PC-3 (cell line): ENCODE measurements at regions of chr12 and their contacts with region 1.

Region 1: GRCh38 chr12:94545935-94546771 is 86.5 kb upstream of the CEP83 start:
- DNase-seq: peak; percentile 80
- ATAC-seq: peak; percentile 98
- H3K4me3 ChIP-seq: no peak overlapping the region
- H3K27ac ChIP-seq: no peak overlapping the region
- H3K4me1 ChIP-seq: no peaks in the 10 kb centered on the region
- H3K27me3 ChIP-seq: no peaks in the 10 kb centered on the region
- CTCF ChIP-seq: peak; percentile 92

Region 2: DNA sequence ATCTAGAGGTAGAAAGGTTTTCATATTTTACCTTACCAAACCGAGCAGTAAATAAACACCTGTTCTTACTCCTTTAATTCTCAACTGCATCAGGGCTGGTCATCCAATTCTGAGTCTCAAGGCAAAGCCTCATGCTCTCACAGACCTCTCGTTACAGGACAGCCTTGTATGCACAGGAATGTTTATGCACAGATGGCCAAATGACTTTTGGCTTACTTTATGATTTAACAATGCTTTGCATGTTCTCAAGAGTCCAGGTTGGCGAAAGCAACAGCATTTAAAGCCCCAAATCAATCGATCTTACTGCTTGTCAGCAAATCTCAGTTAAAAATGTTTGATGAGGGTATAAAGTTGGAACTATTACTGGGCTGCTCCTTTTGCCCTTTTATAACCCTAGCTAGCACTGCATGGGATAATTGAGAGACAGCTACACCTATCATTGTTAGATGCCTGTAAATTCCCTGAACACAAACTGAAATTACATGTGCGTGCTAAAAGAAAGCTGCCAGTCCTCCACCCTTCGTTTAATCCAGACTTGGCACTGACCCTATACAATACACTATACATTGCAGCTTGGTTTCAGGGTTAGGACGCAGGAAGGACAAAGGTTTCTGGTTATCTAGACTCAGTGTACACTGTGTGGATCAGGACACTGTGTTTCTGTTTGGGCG is 40.6 kb after region 1 on chr12:
- CTCF ChIA-PET with region 1: no interaction called
- POLR2A ChIA-PET with region 1: no interaction called
- intact Hi-C with region 1: no loop called
- DNase-seq: peak; percentile 64
- ATAC-seq: peak; percentile 75
- H3K4me3 ChIP-seq: no peak overlapping the region
- H3K27ac ChIP-seq: no peak overlapping the region
- H3K4me1 ChIP-seq: peaks cover 29% of the 10 kb centered on the region
- H3K27me3 ChIP-seq: no peaks in the 10 kb centered on the region
- CTCF ChIP-seq: no peak

Region 3: GRCh38 chr12:94644141-94644979 is 98.2 kb after region 1 on chr12:
- CTCF ChIA-PET with region 1: no interaction called
- POLR2A ChIA-PET with region 1: no interaction called
- intact Hi-C with region 1: loop called (anchors 2 kb)
- DNase-seq: peak; percentile 92
- ATAC-seq: peak; percentile 71
- H3K4me3 ChIP-seq: peak overlapping the region; percentile 56
- H3K27ac ChIP-seq: peak overlapping the region; percentile 94
- H3K4me1 ChIP-seq: peaks cover 48% of the 10 kb centered on the region
- H3K27me3 ChIP-seq: no peaks in the 10 kb centered on the region
- CTCF ChIP-seq: no peak

Region 4: DNA sequence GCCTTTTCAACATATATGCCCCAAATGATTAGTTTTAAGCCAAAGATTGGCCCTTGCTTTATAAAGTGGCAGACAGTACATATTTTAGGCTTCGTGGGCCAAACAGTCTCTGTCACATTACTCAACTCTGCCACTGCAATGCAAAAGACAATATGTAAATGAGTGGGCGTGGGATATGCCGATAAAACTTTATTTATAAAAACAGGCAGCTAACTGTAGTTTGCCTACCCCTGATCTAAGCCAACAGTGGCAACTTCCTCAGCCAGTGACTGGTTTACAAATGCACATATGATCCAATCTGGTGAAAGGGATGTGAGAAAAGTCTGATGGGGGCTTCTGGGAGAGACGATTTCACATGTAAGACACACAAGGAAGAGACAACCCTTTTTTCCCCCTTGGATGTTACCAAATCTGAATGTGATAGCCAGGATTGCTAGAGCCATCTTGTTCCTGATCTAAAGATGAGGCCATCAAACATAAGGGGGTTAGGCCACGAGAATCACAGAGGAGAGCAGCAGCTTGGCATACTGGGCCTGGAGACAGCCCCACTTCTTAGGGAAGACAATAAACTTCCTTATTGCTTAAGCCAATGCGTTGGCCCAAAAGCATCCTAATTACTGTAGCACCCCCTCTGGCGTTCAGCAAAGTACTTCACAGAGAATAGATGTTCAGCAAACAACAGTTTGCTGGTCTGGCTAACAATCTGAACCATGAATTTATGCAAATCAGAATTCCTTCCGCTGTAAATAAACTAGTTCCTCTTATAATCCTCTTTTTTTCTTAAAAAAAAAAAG is 179.4 kb after region 1 on chr12:
- CTCF ChIA-PET with region 1: no interaction called
- POLR2A ChIA-PET with region 1: no interaction called
- intact Hi-C with region 1: loop called (anchors 1 kb)
- DNase-seq: peak; percentile 75
- ATAC-seq: peak; percentile 81
- H3K4me3 ChIP-seq: no peak overlapping the region
- H3K27ac ChIP-seq: no peak overlapping the region
- H3K4me1 ChIP-seq: no peaks in the 10 kb centered on the region
- H3K27me3 ChIP-seq: no peaks in the 10 kb centered on the region
- CTCF ChIP-seq: peak; percentile 77

Region 5: DNA sequence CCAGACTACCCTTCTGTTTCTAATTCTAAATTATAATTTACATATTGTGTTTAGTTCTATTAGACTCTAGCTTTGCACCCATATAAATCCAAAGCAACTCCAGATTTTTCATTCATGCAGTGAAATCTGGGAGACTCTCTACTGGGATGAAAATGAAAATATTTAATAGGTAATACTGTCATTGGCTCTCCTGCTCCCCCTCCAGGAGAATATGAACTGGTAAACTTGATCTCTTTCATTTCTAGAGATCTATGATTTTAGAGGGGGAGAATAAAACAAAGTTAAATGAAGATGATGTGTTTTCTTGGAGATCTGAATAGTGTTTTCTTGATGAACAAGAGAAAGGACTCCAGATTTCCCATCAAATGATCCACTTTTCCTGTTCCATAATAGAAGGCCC is 208.5 kb after region 1 on chr12:
- CTCF ChIA-PET with region 1: no interaction called
- POLR2A ChIA-PET with region 1: no interaction called
- intact Hi-C with region 1: loop called (anchors 2 kb)
- DNase-seq: peak; percentile 24
- ATAC-seq: no peak
- H3K4me3 ChIP-seq: no peak overlapping the region
- H3K27ac ChIP-seq: no peak overlapping the region
- H3K4me1 ChIP-seq: no peaks in the 10 kb centered on the region
- H3K27me3 ChIP-seq: no peaks in the 10 kb centered on the region
- CTCF ChIP-seq: peak; percentile 61

Region 6: DNA sequence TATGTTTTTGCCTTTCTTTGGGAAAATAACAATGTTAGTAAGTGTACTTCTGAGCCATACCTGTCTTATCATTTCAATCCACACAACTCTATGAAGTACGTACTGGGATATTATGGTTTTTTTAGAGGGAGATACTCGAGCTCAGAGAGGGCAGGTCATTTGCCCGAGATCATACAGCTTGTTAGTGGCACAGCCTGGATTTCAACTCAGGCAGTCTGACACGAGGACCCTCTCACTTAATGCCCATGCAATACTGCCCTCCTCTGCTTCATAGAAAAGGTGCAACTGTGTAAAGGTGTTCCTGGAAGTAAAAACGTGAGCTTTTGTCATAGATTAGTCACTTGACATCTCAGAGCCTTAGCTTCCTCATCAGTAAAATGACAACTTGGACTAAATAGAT is 329.4 kb after region 1 on chr12:
- CTCF ChIA-PET with region 1: no interaction called
- POLR2A ChIA-PET with region 1: no interaction called
- intact Hi-C with region 1: loop called (anchors 10 kb)
- DNase-seq: peak; percentile 58
- ATAC-seq: peak; percentile 45
- H3K4me3 ChIP-seq: no peak overlapping the region
- H3K27ac ChIP-seq: no peak overlapping the region
- H3K4me1 ChIP-seq: no peaks in the 10 kb centered on the region
- H3K27me3 ChIP-seq: peaks cover 58% of the 10 kb centered on the region
- CTCF ChIP-seq: peak; percentile 57